ENCODE measurements at regions of chr1 and their contacts with region 1.

Region 1: DNA sequence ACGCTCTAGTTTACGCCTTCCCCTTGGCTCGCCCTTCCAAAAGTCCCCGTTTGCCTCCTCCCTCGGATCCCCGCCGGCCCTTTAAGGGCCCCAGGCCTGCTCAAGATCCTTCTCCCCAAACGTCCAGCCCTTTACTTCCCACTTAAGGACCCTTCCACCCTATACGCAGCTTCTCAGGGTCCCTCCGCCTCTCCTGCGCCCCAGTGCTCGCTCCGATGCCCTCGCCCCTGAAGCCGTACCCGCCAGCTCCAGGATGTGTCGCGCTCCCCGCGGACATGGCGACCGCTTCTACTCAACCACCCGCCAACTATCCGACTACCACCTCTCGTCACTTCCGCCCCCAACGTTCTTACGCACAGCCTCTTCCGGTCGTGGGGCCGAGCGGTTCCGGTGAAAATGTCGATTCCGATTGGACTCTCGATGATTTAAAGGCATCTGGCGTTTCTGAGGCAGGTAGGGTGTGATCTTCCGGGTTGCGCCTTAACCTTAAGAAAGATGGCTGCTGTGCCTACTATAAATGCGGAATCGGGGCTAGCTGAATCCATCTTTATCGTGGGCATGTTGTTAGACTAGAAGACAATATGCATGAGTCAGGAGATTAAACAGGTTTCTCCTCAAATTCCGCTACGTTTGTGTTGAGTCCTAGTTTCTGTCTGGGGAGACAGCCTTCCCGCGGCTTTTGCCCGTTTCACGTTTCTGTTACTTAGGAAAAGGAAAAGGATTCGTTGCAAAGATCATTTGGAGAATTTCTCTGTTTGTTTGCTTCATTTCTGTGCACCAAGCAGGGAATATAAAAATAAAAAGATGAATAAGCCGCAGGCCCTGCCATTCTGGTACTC is at the start of gene KHDC4:
- DNase-seq: peak; percentile 100
- H3K4me3 Mint-ChIP-seq: no peak within 1 kb of the TSS
- H3K27ac Mint-ChIP-seq: no peak within 1 kb of the TSS
- H3K4me1 Mint-ChIP-seq: peaks cover 33% of the 10 kb centered on the region
- H3K27me3 Mint-ChIP-seq: no peaks in the 10 kb centered on the region
- CTCF ChIP-seq: no peak
- total RNA-seq, gene KHDC4: 90.9 and 104 TPM in 2 replicates

Region 2: DNA sequence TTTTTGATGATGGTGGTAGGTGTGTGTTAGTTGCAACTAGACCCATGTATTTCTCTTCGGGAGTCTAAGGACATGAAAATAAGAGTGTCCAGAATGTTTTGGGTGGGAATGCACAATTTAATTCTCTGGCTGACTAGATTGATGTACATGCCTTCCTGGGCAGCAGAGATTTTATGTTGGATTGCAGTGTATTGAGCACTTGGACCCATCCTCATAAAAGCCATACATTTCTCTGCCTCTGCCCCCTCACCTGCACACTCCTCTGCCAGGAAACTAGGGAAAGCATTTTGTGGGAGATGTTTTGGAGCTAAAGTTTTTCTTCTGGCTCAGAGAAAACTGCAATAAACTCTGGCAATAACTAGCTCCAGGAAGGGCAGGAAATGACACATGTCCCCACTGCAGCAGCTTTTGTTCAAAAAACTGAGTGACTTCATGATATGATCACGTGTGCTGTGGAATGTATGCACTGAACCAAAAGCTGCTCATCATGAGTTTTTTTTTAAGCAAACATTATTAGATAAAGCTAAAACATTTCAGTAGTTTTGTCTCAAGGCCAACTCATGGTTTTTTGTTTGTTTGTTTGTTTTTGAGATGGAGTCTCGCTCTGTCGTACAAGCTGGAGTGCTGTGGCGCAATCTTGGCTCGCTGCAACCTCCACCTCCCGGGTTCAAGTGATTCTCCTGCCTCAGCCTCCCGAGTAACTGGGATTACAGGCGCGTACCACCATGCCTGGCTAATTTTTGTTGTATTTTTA is 40.8 kb before region 1 on chr1:
- CTCF ChIA-PET with region 1: interaction called, 3 read pairs
- POLR2A ChIA-PET with region 1: interaction called, 46 read pairs
- intact Hi-C with region 1: no loop called
- DNase-seq: peak; percentile 83
- H3K4me3 Mint-ChIP-seq: peak overlapping the region; percentile 53
- H3K27ac Mint-ChIP-seq: peak overlapping the region; percentile 93
- H3K4me1 Mint-ChIP-seq: peaks cover 16% of the 10 kb centered on the region
- H3K27me3 Mint-ChIP-seq: no peaks in the 10 kb centered on the region
- CTCF ChIP-seq: no peak

Region 3: GRCh38 chr1:155951753-155952504 is 17.6 kb after region 1 on chr1:
- CTCF ChIA-PET with region 1: interaction called, 21 read pairs
- POLR2A ChIA-PET with region 1: interaction called, 14 read pairs
- intact Hi-C with region 1: no loop called
- DNase-seq: no peak
- H3K4me3 Mint-ChIP-seq: no peak overlapping the region
- H3K27ac Mint-ChIP-seq: peak overlapping the region; percentile 19
- H3K4me1 Mint-ChIP-seq: no peaks in the 10 kb centered on the region
- H3K27me3 Mint-ChIP-seq: no peaks in the 10 kb centered on the region
- CTCF ChIP-seq: no peak

Region 4: GRCh38 chr1:155989242-155990004 is 55.1 kb after region 1 on chr1:
- CTCF ChIA-PET with region 1: interaction called, 175 read pairs
- POLR2A ChIA-PET with region 1: interaction called, 294 read pairs
- intact Hi-C with region 1: loop called (anchors 1 kb)
- DNase-seq: peak; percentile 85
- H3K4me3 Mint-ChIP-seq: no peak overlapping the region
- H3K27ac Mint-ChIP-seq: no peak overlapping the region
- H3K4me1 Mint-ChIP-seq: peaks cover 14% of the 10 kb centered on the region
- H3K27me3 Mint-ChIP-seq: no peaks in the 10 kb centered on the region
- CTCF ChIP-seq: peak; percentile 99

Region 5: GRCh38 chr1:156054500-156055280 is 120.4 kb after region 1 on chr1 and contains the start of gene LAMTOR2:
- CTCF ChIA-PET with region 1: interaction called, 6 read pairs
- POLR2A ChIA-PET with region 1: interaction called, 7 read pairs
- intact Hi-C with region 1: loop called (anchors 2 kb)
- DNase-seq: peak; percentile 100
- H3K4me3 Mint-ChIP-seq: peak within 1 kb of the TSS; percentile 99
- H3K27ac Mint-ChIP-seq: peak within 1 kb of the TSS; percentile 95
- H3K4me1 Mint-ChIP-seq: peaks cover 33% of the 10 kb centered on the region
- H3K27me3 Mint-ChIP-seq: no peaks in the 10 kb centered on the region
- CTCF ChIP-seq: no peak
- total RNA-seq, gene LAMTOR2: 88.1 and 104 TPM in 2 replicates

Region 6: DNA sequence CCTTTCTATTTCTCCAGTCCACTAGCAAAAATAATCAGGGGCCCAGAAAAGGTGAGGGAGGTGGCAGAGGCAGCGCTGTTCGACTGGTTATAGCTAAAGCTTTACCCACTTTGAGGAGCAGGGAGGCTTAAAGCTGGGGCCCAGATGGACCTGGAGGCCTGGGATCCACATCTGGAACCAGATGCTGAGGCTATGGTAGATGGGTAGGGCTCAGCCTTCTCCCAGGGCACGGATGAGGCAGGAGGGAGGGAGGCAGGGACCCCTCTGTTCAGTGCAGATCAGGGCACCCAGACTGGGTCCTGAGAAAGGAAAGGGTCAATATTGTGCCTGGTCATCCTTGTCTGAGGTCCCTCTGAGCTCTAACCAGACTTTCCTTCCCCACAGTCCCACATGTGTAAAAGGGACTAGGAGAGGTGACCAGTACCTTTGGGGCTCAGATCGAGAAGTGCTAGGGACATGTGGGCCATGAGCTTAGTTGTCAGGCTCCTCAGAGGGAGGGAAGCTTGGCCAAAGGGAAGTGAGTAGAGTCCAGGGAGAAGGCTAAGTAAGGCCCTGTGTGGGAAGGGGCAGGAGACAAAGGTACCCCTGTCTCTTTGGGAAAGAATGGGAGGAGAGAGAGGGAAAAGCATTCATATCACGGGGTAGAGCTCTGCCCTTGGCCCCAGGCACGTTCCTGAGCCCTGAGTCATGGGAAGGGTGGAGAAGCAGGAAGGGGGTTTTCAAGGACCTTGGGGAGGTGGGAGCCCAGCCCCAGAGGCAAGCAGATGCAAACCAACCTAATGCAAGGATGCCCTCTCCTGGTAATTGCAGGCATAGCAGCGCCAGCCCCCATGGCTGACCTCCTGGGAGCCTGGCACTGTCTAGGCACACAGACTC is 195.6 kb after region 1 on chr1:
- CTCF ChIA-PET with region 1: no interaction called
- POLR2A ChIA-PET with region 1: interaction called, 38 read pairs
- intact Hi-C with region 1: no loop called
- DNase-seq: peak; percentile 99
- H3K4me3 Mint-ChIP-seq: peak overlapping the region; percentile 60
- H3K27ac Mint-ChIP-seq: peak overlapping the region; percentile 96
- H3K4me1 Mint-ChIP-seq: peaks cover 50% of the 10 kb centered on the region
- H3K27me3 Mint-ChIP-seq: no peaks in the 10 kb centered on the region
- CTCF ChIP-seq: peak; percentile 100